ENCODE measurements at regions of chr11 and their contacts with region 1.

Region 1: DNA sequence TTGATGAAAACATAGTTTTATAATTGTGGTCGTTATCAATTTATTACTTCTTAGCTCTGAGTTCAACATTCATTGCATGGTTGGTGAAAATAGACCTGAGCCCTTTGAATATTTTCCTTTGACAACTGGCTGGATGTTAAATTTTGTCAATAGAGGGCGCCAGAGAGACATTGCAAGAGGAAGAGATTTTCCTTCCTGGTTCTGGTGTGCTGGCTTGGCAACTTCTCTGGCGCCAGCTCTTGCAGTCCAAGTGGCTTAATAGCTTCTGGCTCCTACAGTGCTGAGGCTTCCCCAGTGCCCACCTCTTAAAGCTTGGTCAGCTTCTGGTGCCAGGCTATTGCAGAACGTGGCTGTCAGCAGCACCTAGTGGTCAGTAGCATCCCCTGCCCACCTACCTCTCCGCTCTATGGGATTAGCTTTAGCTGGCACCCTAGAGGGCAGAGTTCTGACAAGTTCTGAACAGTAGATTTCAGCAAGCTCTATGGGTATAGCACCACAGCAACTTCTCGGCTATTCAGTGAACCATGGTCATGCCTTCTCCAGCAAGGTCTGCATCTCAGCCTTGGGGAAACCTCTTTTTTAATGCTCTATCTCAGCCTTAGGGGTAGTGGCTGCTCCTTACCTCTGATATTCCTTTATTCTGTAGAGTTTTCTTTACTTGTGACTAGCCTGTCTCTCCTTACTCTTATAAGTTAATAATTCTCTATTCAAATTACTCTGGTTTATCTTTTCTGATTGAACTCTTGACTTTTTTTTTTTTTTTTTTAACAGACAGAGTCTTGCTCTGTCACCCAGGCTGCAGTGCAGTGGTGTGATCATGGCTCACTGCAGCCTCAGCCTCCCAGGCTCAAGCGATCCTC is 59.4 kb downstream of the ACER3 start:
- DNase-seq: peak; percentile 83
- ATAC-seq: peak; percentile 83
- H3K4me3 Mint-ChIP-seq: no peak overlapping the region
- H3K27ac Mint-ChIP-seq: no peak overlapping the region
- H3K4me1 Mint-ChIP-seq: peaks cover 6% of the 10 kb centered on the region
- H3K27me3 Mint-ChIP-seq: peaks cover 4% of the 10 kb centered on the region

Region 2: DNA sequence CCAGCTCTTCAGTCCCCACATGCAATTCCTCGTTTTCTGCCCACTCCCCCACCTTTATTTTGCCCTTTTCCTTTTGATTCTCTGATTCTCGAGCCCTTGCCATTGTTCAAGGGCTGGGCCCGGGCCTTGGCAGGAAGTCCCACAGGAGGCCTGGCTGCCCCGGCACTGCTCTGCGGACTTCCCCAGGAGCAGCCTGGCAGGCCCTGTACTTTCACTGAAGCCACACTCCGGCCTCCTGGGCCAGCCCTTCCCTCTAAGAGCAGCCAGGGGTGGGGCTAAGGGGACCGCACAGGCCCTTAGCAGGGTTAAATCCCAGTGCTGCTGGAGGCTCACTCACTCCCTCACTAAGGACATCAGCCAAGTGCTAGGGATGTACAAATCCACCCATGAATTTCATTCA is 253.7 kb before region 1 on chr11:
- CTCF ChIA-PET with region 1: no interaction called
- POLR2A ChIA-PET with region 1: no interaction called
- DNase-seq: no peak
- ATAC-seq: no peak
- H3K4me3 Mint-ChIP-seq: no peak overlapping the region
- H3K27ac Mint-ChIP-seq: no peak overlapping the region
- H3K4me1 Mint-ChIP-seq: peaks cover 40% of the 10 kb centered on the region
- H3K27me3 Mint-ChIP-seq: peaks cover 26% of the 10 kb centered on the region

Region 3: DNA sequence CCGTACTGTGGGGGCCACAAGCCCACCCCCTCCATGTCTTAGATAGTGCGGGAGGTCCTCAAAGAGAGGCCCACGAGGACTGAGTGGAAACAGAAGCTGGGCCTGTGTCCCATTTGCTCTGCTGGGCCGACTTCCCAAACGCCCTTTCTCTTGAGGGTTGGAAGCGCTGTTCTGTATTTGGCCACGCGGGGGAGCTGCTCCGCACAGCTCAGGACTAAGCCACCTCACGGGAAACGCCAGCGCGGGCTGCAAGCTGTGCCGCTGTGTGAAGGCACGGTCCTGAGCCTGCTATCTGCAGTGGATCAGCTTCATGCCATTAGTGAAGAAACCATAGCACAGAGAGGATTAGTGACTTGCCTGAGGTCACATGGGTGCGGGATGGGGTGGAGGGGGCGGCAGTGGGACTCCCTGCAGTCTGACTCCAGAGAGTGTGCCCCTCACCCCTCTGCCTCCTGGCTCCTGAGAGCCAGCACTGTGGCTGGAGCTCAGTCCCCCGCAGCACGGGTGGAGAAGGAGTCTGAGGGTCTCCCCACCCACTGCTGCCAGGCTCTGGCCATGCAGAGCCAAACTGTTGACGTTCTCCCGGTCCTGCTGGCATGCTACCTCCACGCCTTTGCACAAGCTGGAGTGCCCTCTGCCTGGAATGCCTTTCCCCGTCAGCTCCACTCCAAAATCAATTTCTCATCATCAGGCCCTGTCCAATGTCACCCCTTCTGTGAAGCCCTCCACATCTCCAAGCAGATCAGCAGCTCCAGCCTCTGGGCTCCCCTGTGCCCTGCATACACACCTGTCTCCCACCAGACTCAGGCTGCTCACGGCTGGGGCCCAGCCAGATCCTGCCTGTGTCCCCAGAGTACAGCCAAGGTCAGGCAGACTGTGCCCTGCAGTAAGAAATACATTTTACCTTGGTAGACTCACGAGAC is 198.1 kb before region 1 on chr11:
- CTCF ChIA-PET with region 1: interaction called, 59 read pairs
- POLR2A ChIA-PET with region 1: no interaction called
- DNase-seq: peak; percentile 84
- ATAC-seq: peak; percentile 97
- H3K4me3 Mint-ChIP-seq: no peak overlapping the region
- H3K27ac Mint-ChIP-seq: no peak overlapping the region
- H3K4me1 Mint-ChIP-seq: peaks cover 6% of the 10 kb centered on the region
- H3K27me3 Mint-ChIP-seq: peaks cover 13% of the 10 kb centered on the region

Region 4: DNA sequence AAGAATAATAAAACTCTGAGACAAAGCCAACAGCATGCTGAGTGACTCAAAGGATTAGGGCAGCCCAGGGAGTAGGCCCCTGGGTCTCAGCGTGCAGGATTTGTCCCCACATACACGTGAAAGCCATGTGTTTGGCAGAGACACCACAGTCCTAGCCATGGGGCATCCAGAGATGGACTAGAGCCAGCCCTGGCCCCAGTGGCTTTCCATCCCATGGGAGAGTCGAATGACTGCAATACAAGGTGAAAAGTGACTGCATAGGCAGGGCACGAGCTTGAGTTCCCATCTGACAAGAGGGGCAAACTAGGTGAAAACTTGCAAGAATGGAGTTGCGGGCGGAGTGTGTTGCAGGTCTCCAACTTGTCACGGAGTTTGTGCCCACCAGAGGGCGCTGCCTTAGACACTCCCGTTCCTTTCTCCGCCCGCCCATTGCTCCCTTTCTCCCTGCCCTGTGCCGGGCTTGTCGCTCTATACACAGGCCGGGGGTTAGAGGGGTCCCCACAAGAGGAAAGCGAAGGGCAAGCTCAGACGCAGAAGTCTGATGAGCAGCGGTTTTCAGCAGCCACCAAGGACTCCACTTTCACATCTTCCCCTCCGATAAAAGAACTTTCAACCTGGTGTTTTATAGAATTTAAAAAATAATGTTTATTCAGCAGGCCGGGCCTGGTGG is 112.8 kb before region 1 on chr11:
- CTCF ChIA-PET with region 1: interaction called, 144 read pairs
- POLR2A ChIA-PET with region 1: no interaction called
- DNase-seq: peak; percentile 79
- ATAC-seq: peak; percentile 66
- H3K4me3 Mint-ChIP-seq: no peak overlapping the region
- H3K27ac Mint-ChIP-seq: no peak overlapping the region
- H3K4me1 Mint-ChIP-seq: peaks cover 38% of the 10 kb centered on the region
- H3K27me3 Mint-ChIP-seq: peaks cover 12% of the 10 kb centered on the region

Region 5: DNA sequence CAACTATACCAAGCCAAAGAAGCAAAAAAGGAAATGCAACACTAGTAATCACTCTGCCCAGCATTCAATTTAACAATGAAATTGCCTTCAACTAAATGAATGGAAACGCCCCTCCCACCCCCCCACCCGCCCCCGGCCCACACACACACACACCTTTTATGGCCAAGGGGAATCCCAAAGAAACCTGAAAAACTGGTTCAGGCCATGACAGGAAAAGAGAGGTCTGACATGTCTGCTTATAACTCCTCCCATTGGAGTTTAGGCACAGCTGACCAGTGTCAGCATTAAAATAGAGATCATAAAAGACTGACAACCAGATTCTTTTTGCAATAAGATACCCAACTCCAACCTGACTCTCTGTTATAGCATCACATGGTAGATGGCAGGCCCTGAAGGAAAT is 16.8 kb before region 1 on chr11:
- CTCF ChIA-PET with region 1: interaction called, 48 read pairs
- POLR2A ChIA-PET with region 1: no interaction called
- DNase-seq: no peak
- ATAC-seq: no peak
- H3K4me3 Mint-ChIP-seq: no peak overlapping the region
- H3K27ac Mint-ChIP-seq: no peak overlapping the region
- H3K4me1 Mint-ChIP-seq: no peaks in the 10 kb centered on the region
- H3K27me3 Mint-ChIP-seq: no peaks in the 10 kb centered on the region

Region 6: DNA sequence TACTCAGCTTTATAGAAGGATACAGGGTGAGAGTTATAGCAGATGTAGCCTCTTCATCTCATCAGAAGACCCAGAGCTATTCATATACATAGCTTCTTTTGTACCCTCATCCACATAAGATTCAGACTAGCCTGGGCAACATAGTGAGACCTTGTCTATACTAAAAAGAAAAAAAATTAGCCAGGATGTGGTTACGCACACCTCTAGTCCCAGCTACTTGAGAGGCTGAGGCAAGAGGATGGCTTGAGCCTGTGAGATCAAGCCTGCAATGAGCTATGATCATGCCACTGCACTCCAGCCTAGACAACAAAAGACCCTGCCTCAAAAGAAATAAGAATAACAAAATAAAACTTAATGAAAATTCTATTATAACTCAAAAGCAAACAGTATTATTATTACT is 77.4 kb after region 1 on chr11:
- CTCF ChIA-PET with region 1: interaction called, 16 read pairs
- POLR2A ChIA-PET with region 1: no interaction called
- DNase-seq: peak; percentile 31
- ATAC-seq: peak; percentile 74
- H3K4me3 Mint-ChIP-seq: no peak overlapping the region
- H3K27ac Mint-ChIP-seq: no peak overlapping the region
- H3K4me1 Mint-ChIP-seq: peaks cover 9% of the 10 kb centered on the region
- H3K27me3 Mint-ChIP-seq: no peaks in the 10 kb centered on the region

Region 7: GRCh38 chr11:77047007-77047927 is 127.2 kb after region 1 on chr11:
- CTCF ChIA-PET with region 1: interaction called, 32 read pairs
- POLR2A ChIA-PET with region 1: no interaction called
- DNase-seq: peak; percentile 91
- ATAC-seq: peak; percentile 89
- H3K4me3 Mint-ChIP-seq: peak overlapping the region; percentile 37
- H3K27ac Mint-ChIP-seq: peak overlapping the region; percentile 1
- H3K4me1 Mint-ChIP-seq: peaks cover 15% of the 10 kb centered on the region
- H3K27me3 Mint-ChIP-seq: peaks cover 21% of the 10 kb centered on the region

Measured in activated CD8-positive, alpha-beta T cell treated with anti-CD3 and anti-CD28 coated beads, Interleukin-2, amount 10 ng/mL, durations not matched to agents 7 days and 5 days (primary cell).